ENCODE measurements at regions of chr9 and their contacts with region 1.

Region 1: GRCh38 chr9:91422758-91423711 is 597 bp downstream of the NFIL3 start:
- DNase-seq: peak in 1 of 2 donors; percentile 67
- H3K4me3 ChIP-seq: peak overlapping the region; percentile 62 to 72
- H3K27ac ChIP-seq: peak overlapping the region; percentile 97
- H3K4me1 ChIP-seq: peaks cover 50% of the 10 kb centered on the region
- H3K27me3 ChIP-seq: no peaks in the 10 kb centered on the region
- CTCF ChIP-seq: no peak
- POLR2A ChIP-seq: peak in 1 of 2 donors; percentile 6

Region 2: DNA sequence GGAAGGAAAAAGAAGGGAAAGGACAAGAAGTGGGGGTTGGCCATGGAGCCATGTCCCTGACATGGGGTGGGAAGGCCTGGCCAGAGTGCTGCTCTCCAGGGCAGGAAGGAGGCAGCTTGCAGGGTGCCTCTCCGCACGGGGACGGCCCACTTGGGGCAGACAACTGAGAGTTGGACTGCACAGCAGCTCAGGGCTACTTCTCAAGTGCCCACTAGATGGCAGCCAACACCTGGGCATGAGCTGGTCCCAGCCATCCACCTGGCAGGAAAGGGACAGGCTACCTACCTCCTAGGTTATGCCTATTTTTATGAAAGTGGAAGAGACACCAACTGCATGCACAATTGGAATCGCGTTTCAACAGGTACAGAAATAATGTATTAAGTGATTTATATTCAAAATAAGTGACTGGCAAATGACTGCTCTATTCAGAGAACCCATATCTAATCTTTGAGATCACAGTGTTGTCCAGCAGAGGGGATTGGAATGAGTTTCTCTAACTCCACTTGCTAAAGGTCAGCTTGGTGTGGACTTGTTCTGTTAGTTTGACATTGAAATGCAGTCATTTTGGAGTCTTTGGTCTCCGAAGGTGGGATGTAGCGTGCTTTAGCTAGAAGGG is 508.1 kb before region 1 on chr9:
- intact Hi-C with region 1: loop called (anchors 5 kb)
- DNase-seq: no peak
- H3K4me3 ChIP-seq: no peak overlapping the region
- H3K27ac ChIP-seq: no peak overlapping the region
- H3K4me1 ChIP-seq: peaks cover 8% of the 10 kb centered on the region
- H3K27me3 ChIP-seq: no peaks in the 10 kb centered on the region
- CTCF ChIP-seq: peak; percentile 76 to 98 (median 79)
- POLR2A ChIP-seq: no peak

Region 3: DNA sequence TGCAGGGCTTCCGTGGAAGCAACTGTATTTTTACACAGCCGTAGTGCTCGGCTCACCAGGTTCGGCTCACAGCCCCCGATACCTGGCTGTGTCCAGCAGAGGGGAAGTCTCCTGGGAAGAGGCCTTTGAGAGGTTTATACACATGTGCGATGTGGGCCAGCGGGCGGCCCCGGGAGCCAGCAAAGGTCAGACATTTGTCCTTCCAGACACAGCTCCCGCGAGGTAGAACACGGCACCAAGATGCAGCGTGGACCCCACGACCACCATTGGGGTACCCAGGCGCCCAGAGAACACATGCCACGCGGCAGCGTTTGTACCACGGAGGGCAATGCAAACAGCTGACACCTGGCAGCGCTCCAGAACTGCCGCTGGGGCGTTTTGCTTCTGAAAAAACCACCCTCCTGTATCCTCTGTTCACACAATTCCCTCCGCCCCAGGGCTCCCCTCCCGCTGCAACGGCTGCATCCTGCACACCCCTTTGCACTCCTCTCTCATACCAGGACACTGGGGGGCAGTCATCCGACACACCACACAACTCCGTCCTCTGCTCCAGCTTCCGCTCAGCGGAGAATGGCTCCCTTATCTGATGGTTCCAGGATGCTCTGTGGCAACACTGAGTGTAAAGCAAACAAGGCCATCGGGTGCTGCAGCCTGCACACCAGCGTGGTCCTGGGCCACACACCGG is 386.1 kb before region 1 on chr9:
- intact Hi-C with region 1: loop called (anchors 5 kb)
- DNase-seq: no peak
- H3K4me3 ChIP-seq: no peak overlapping the region
- H3K27ac ChIP-seq: peak overlapping the region; percentile 78
- H3K4me1 ChIP-seq: peaks cover 27% of the 10 kb centered on the region
- H3K27me3 ChIP-seq: no peaks in the 10 kb centered on the region
- CTCF ChIP-seq: peak in 2 of 3 experiments; percentile 6 to 61
- POLR2A ChIP-seq: no peak

Region 4: GRCh38 chr9:91060503-91061343 is 362.3 kb before region 1 on chr9:
- intact Hi-C with region 1: loop called (anchors 5 kb)
- DNase-seq: peak; percentile 25 to 95
- H3K4me3 ChIP-seq: no peak overlapping the region
- H3K27ac ChIP-seq: peak overlapping the region; percentile 70
- H3K4me1 ChIP-seq: peaks cover 32% of the 10 kb centered on the region
- H3K27me3 ChIP-seq: no peaks in the 10 kb centered on the region
- CTCF ChIP-seq: no peak
- POLR2A ChIP-seq: no peak

Region 5: GRCh38 chr9:91193658-91194391 is 229.2 kb before region 1 on chr9:
- intact Hi-C with region 1: loop called (anchors 1 kb)
- DNase-seq: no peak
- H3K4me3 ChIP-seq: peak overlapping the region; percentile 39 to 43
- H3K27ac ChIP-seq: peak overlapping the region; percentile 95
- H3K4me1 ChIP-seq: peaks cover 71% of the 10 kb centered on the region
- H3K27me3 ChIP-seq: no peaks in the 10 kb centered on the region
- CTCF ChIP-seq: no peak
- POLR2A ChIP-seq: peak in 1 of 2 donors; percentile 46

Region 6: DNA sequence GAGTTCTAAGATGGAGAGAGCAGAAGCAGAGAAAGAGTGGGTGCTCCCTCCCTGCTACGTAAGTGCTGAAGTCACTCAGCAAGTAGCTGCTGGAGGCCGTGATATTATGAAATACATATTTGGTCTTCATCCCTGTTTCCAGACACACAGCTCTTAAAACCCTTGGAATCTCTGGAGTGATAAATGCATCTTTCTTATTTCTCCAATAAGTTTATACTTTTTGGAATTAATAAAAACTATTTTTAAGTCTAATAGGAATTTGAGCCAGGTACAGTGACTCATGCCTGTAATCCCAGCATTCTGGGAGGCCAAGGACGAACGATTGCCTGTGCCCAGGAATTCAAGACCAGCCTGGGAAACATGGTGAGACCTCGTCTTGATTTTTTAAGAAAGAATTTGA is 121.9 kb before region 1 on chr9:
- intact Hi-C with region 1: loop called (anchors 5 kb)
- DNase-seq: no peak
- H3K4me3 ChIP-seq: no peak overlapping the region
- H3K27ac ChIP-seq: peak overlapping the region; percentile 54
- H3K4me1 ChIP-seq: peaks cover 56% of the 10 kb centered on the region
- H3K27me3 ChIP-seq: no peaks in the 10 kb centered on the region
- CTCF ChIP-seq: no peak
- POLR2A ChIP-seq: no peak

Region 7: GRCh38 chr9:91560285-91560684 is 137.2 kb after region 1 on chr9:
- intact Hi-C with region 1: no loop called
- DNase-seq: no peak
- H3K4me3 ChIP-seq: no peak overlapping the region
- H3K27ac ChIP-seq: no peak overlapping the region
- H3K4me1 ChIP-seq: no peaks in the 10 kb centered on the region
- H3K27me3 ChIP-seq: no peaks in the 10 kb centered on the region
- CTCF ChIP-seq: no peak
- POLR2A ChIP-seq: no peak

Measured in vagina (tissue), 2 donors.